Natural killer cell (primary cell): ENCODE measurements at regions of chr12 and their contacts with region 1.

Region 1: GRCh38 chr12:128797119-128798118 is 26.3 kb downstream of the SLC15A4 start:
- DNase-seq: peak; percentile 68 to 69
- ATAC-seq: peak; percentile 48 to 69 (median 56)
- H3K4me3 ChIP-seq: peak overlapping the region; percentile 9
- H3K4me3 Mint-ChIP-seq: peak overlapping the region; percentile 94
- H3K27ac ChIP-seq: peak overlapping the region; percentile 100
- H3K27ac Mint-ChIP-seq: peak overlapping the region; percentile 100
- H3K4me1 ChIP-seq: peaks cover 73% of the 10 kb centered on the region
- H3K4me1 Mint-ChIP-seq: peaks cover 70 to 91% of the 10 kb centered on the region in 2 donors
- H3K27me3 ChIP-seq: no peaks in the 10 kb centered on the region
- H3K27me3 Mint-ChIP-seq: no peaks in the 10 kb centered on the region
- CTCF ChIP-seq: no peak

Region 2: DNA sequence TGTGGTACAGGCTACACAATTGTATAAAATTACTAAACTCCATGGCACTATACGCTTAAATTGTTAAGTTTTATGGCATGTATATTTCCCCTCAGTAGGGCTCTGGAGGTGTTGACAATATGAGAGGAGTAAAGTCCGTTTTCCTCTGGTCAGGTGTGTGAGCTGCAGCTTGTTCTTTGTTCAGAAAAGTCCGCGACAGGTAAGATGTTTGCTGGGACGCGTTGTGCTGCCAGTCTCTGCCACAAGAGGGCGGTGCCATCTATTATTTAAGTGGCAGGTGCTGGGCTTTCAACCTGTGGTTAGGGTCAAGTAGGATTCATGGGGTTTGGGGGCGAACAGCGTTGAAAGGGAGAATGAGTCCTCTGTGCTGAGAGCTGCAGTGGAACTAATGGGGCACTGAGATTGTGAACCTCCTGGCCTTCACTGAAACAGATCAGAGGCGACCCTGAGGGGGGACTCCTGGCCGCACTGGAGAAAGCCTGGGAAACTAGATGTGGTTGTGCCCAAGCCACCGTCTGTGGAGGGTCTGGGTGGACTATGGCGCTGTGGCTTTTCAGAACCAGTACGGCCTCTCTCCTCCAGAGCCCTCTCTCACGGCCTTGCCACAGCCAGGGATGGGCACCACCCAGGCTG is 152.6 kb before region 1 on chr12:
- intact Hi-C with region 1: loop called (anchors 10 kb)
- DNase-seq: peak; percentile 47
- ATAC-seq: peak; percentile 35 to 79 (median 54)
- H3K4me3 ChIP-seq: no peak overlapping the region
- H3K4me3 Mint-ChIP-seq: no peak overlapping the region
- H3K27ac ChIP-seq: no peak overlapping the region
- H3K27ac Mint-ChIP-seq: peak overlapping the region in 1 of 2 donors; percentile 75
- H3K4me1 ChIP-seq: peaks cover 6% of the 10 kb centered on the region
- H3K4me1 Mint-ChIP-seq: peaks cover 34 to 43% of the 10 kb centered on the region in 2 donors
- H3K27me3 ChIP-seq: no peaks in the 10 kb centered on the region
- H3K27me3 Mint-ChIP-seq: no peaks in the 10 kb centered on the region
- CTCF ChIP-seq: peak; percentile 86

Region 3: GRCh38 chr12:128761379-128761790 is 36.0 kb before region 1 on chr12:
- intact Hi-C with region 1: loop called (anchors 1 kb)
- DNase-seq: no peak
- ATAC-seq: no peak
- H3K4me3 ChIP-seq: no peak overlapping the region
- H3K4me3 Mint-ChIP-seq: no peak overlapping the region
- H3K27ac ChIP-seq: no peak overlapping the region
- H3K27ac Mint-ChIP-seq: no peak overlapping the region
- H3K4me1 ChIP-seq: peaks cover 17% of the 10 kb centered on the region
- H3K4me1 Mint-ChIP-seq: peaks cover 26 to 41% of the 10 kb centered on the region in 2 donors
- H3K27me3 ChIP-seq: no peaks in the 10 kb centered on the region
- H3K27me3 Mint-ChIP-seq: no peaks in the 10 kb centered on the region
- CTCF ChIP-seq: no peak

Region 4: GRCh38 chr12:128810182-128811127 is 13.0 kb after region 1 on chr12:
- intact Hi-C with region 1: loop called (anchors 1 kb)
- DNase-seq: peak; percentile 70 to 73
- ATAC-seq: peak; percentile 64 to 84 (median 68)
- H3K4me3 ChIP-seq: peak overlapping the region; percentile 2
- H3K4me3 Mint-ChIP-seq: peak overlapping the region; percentile 94
- H3K27ac ChIP-seq: peak overlapping the region; percentile 97
- H3K27ac Mint-ChIP-seq: peak overlapping the region; percentile 99
- H3K4me1 ChIP-seq: peaks cover 51% of the 10 kb centered on the region
- H3K4me1 Mint-ChIP-seq: peaks cover 63 to 65% of the 10 kb centered on the region in 2 donors
- H3K27me3 ChIP-seq: no peaks in the 10 kb centered on the region
- H3K27me3 Mint-ChIP-seq: no peaks in the 10 kb centered on the region
- CTCF ChIP-seq: no peak